Activated CD4-positive, alpha-beta T cell treated with anti-CD3 and anti-CD28 coated beads for 36 hours (primary cell): ENCODE measurements at regions of chr2 and their contacts with region 1.

Region 1: DNA sequence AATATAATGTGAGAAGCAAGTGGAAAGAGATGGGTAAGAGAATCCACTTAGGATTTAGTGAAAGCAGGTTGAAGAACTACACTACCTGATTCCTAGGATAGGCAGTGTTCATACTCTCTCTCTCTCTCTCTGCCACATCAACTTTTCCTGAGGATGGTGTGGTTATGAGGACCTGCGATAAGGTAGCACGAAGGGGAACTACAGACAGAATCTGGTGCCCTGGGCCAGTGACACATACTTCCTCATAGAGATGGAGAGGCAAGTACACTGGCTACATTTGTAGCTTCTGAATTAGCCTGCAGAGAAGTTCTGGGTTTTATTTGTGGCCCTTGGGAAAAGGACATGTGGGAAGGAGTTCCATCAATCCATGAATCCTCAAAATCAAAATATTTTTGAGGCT is 44.5 kb downstream of the PTH2R start:
- DNase-seq: no peak
- ATAC-seq: no peak
- H3K4me3 Mint-ChIP-seq: no peak overlapping the region
- H3K27ac Mint-ChIP-seq: no peak overlapping the region
- H3K4me1 Mint-ChIP-seq: no peaks in the 10 kb centered on the region
- H3K27me3 Mint-ChIP-seq: no peaks in the 10 kb centered on the region

Region 2: DNA sequence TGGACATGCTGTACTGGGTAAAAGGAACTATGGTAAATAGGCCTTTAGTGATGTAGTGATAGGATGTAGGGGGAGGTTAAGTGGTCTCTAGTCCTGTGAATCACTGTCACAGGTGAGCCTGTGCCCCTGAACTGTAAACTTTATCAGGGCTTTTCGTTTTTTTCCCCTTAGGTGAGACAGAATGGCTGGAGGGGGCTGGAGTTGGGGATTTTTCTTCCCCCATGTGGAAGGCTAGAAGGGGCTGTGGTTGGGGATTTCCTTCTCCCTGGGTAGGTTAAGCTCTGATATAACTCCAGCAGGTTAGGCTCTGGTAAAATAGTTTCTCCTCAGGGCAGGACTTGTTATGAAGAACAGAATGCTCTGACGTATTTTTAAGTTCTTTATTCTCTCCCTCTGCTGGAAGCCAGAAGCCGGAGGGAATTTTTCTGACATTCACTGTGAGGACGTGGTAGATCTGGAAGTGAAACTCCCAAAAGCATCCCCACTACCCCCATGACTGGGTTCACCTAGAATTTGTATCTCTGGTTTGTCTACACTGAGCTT is 156.5 kb before region 1 on chr2:
- CTCF ChIA-PET with region 1: no interaction called
- POLR2A ChIA-PET with region 1: no interaction called
- intact Hi-C with region 1: no loop called
- DNase-seq: no peak
- ATAC-seq: no peak
- H3K4me3 Mint-ChIP-seq: no peak overlapping the region
- H3K27ac Mint-ChIP-seq: peak overlapping the region; percentile 17
- H3K4me1 Mint-ChIP-seq: peaks cover 44% of the 10 kb centered on the region
- H3K27me3 Mint-ChIP-seq: no peaks in the 10 kb centered on the region

Region 3: DNA sequence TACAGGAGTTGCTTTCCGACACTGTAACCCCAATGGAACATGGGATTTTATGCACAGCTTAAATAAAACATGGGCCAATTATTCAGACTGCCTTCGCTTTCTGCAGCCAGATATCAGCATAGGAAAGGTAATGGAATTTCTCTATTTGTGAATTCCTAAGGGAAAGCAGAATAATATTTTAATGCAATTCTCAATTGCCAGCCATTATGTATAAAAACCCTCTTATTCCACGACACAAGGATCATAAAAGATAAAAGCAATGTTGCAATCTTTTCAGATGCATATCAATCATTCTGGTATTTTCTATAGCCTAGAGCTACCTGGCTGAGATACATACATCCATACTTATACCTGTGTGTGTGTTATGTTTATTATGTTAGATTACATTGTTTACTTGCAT is 13.3 kb before region 1 on chr2:
- CTCF ChIA-PET with region 1: no interaction called
- POLR2A ChIA-PET with region 1: no interaction called
- intact Hi-C with region 1: no loop called
- DNase-seq: no peak
- ATAC-seq: no peak
- H3K4me3 Mint-ChIP-seq: no peak overlapping the region
- H3K27ac Mint-ChIP-seq: no peak overlapping the region
- H3K4me1 Mint-ChIP-seq: no peaks in the 10 kb centered on the region
- H3K27me3 Mint-ChIP-seq: peaks cover 7% of the 10 kb centered on the region

Region 4: GRCh38 chr2:208485390-208485789 is 34.3 kb after region 1 on chr2:
- CTCF ChIA-PET with region 1: no interaction called
- POLR2A ChIA-PET with region 1: no interaction called
- intact Hi-C with region 1: loop called in 1 of 2 experiments (anchors 2 kb)
- DNase-seq: no peak
- ATAC-seq: no peak
- H3K4me3 Mint-ChIP-seq: no peak overlapping the region
- H3K27ac Mint-ChIP-seq: no peak overlapping the region
- H3K4me1 Mint-ChIP-seq: no peaks in the 10 kb centered on the region
- H3K27me3 Mint-ChIP-seq: peaks cover 2% of the 10 kb centered on the region

Region 5: GRCh38 chr2:208556983-208557484 is 106.0 kb after region 1 on chr2:
- CTCF ChIA-PET with region 1: no interaction called
- POLR2A ChIA-PET with region 1: no interaction called
- intact Hi-C with region 1: no loop called
- DNase-seq: no peak
- ATAC-seq: no peak
- H3K4me3 Mint-ChIP-seq: no peak overlapping the region
- H3K27ac Mint-ChIP-seq: no peak overlapping the region
- H3K4me1 Mint-ChIP-seq: no peaks in the 10 kb centered on the region
- H3K27me3 Mint-ChIP-seq: no peaks in the 10 kb centered on the region